ENCODE measurements at regions of chr13 and their contacts with region 1.

Region 1: DNA sequence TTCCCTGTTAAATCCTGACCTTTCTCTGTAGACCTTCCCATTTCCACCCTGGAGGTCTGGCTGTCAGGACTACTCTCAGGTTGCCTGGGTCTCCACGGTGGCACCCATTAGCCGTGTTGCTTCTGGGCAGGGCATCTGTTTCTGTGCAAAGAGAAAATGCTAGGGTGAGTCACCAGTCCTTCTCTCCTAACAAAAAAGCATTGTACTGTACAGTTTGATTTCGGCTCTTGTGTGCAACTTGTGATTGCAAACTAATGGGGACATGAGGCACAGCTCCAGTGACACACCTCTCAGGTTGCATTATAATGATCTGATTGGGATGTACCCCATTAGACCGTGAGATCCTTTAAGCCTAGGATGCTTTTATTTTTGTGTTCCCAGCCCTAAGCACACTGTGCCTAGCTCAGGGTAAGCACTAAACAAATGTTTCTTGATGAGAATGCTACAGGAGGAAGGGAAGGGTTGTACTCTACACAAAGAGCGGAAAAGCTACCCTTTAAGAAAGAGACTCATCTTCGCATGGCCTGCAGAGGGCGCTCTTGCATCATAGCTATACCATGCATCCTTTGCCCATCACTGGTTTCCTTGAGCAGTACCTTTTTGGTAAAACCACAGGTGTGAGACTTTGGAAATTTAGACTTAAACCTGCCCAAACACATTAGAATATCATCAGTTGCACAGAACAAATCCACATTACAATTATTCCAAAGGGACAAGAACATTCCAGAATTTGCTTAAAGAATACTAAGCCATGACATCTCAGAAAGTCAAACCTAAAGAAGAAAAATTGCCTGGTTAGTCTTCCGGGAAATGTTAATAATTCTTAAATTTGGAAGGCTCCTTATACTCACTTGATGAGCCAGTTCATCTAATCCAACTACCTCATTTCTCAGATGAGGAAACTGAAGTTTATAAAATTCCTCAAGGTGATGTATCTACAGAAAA is 20.3 kb upstream of the TRIM13 start:
- DNase-seq: peak in 1 of 2 experiments; percentile 75
- H3K4me3 ChIP-seq: no peak overlapping the region
- H3K27ac ChIP-seq: no peak overlapping the region
- H3K4me1 ChIP-seq: no peaks in the 10 kb centered on the region
- H3K27me3 ChIP-seq: no peaks in the 10 kb centered on the region
- CTCF ChIP-seq: peak; percentile 19 to 96 (median 82)
- EP300 ChIP-seq: no peak
- POLR2A ChIP-seq: no peak
- RAD21 ChIP-seq: peak; percentile 97 to 98

Region 2: GRCh38 chr13:49951754-49952535 is 24.6 kb before region 1 on chr13:
- CTCF ChIA-PET with region 1: interaction called, 11 read pairs
- POLR2A ChIA-PET with region 1: no interaction called
- DNase-seq: no peak
- H3K4me3 ChIP-seq: no peak overlapping the region
- H3K27ac ChIP-seq: no peak overlapping the region
- H3K4me1 ChIP-seq: peaks cover 0 to 3% (median 0%) of the 10 kb centered on the region in 4 experiments; a peak in 1 of 7 replicates
- H3K27me3 ChIP-seq: no peaks in the 10 kb centered on the region
- CTCF ChIP-seq: no peak
- EP300 ChIP-seq: no peak
- POLR2A ChIP-seq: no peak
- RAD21 ChIP-seq: no peak

Region 3: DNA sequence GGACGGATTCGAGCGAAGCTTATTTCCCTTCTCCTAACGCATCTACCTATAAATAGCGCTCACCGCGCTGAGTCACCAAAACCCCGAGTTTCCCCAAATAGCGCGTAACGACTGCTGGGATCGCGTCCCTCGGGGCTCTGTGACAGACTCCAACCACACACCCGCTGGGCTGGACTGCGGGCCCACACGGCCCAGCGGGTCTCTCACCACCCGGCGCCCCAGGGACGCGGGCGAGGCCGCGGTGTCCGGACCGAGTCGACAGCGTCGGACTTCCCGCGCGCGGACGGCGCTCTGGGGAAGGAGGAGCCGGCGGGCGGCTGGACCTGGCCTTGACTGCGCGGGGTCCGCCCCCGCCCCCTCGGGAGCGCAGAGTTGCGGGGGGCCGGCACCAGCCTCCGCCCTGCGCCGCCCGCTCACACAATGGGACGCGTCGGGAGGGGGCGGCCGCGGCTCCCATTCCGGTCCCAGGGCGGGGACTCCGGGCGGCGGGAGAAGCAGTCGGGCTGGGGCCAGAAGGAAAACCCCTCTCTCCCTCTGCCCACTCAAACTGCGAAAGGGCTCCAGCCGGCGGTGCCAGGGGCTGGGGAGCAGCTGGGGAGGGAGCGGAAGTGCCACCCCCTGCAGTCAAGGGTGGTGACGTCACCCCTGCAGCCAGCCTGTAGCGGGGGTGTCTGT is 147.4 kb after region 1 on chr13:
- CTCF ChIA-PET with region 1: interaction called, 12 read pairs
- POLR2A ChIA-PET with region 1: no interaction called
- DNase-seq: peak; percentile 78 to 87
- H3K4me3 ChIP-seq: peak overlapping the region; percentile 70 to 85 (median 72)
- H3K27ac ChIP-seq: no peak overlapping the region
- H3K4me1 ChIP-seq: peaks cover 5 to 30% (median 23%) of the 10 kb centered on the region in 4 experiments
- H3K27me3 ChIP-seq: peaks cover 38 to 66% (median 63%) of the 10 kb centered on the region in 4 experiments
- CTCF ChIP-seq: no peak
- EP300 ChIP-seq: 0 out of 3 replicates have a peak, but pooled peaks of 1 of the 2 experiments have one; percentile 12
- POLR2A ChIP-seq: no peak
- RAD21 ChIP-seq: no peak

Region 4: GRCh38 chr13:50801087-50801931 is 824.7 kb after region 1 on chr13:
- CTCF ChIA-PET with region 1: interaction called, 11 read pairs
- POLR2A ChIA-PET with region 1: no interaction called
- DNase-seq: peak; percentile 25 to 77
- H3K4me3 ChIP-seq: peak overlapping the region in 2 of 4 experiments; percentile 2 to 41; a peak in 4 of 8 replicates
- H3K27ac ChIP-seq: no peak overlapping the region
- H3K4me1 ChIP-seq: peaks cover 0 to 7% (median 4%) of the 10 kb centered on the region in 4 experiments; a peak in 4 of 7 replicates
- H3K27me3 ChIP-seq: no peaks in the 10 kb centered on the region
- CTCF ChIP-seq: peak; percentile 61 to 85 (median 70)
- EP300 ChIP-seq: no peak
- POLR2A ChIP-seq: no peak
- RAD21 ChIP-seq: peak; percentile 95 to 96